Posterior vena cava (tissue), 2 donors: ENCODE measurements at regions of chr15 and their contacts with region 1.

Region 1: GRCh38 chr15:70182857-70183695 is 85.4 kb upstream of the TLE3 start:
- DNase-seq: no peak

Region 2: GRCh38 chr15:70121624-70122297 is 61.3 kb before region 1 on chr15:
- intact Hi-C with region 1: no loop called
- DNase-seq: peak; percentile 94

Region 3: DNA sequence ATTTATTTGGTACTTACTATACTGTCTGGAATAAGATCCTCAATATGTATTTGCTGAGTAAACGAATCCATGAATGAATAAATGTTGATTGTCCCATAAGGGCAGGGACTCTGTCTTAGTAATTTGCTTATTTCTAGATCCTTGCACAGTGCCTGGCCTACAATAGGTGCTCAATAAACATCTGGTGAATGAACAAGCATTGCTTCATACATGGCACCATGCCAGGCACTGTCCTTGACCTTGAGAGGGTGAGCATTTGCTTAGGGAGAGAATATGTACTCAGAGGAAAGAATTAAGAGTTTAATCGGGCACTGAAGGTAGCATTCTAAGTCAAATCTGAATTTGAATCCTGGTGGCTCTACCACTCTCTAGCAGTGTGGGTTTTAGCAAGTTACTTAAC is 1214.3 kb after region 1 on chr15:
- intact Hi-C with region 1: loop called in 1 of 2 experiments (anchors 5 kb)
- DNase-seq: no peak